ENCODE measurements at regions of chr6 and their contacts with region 1.

Region 1: GRCh38 chr6:110682460-110682853 is 132.8 kb downstream of the CDK19 start:
- DNase-seq: peak; percentile 85
- ATAC-seq: peak; percentile 100
- H3K4me3 ChIP-seq: no peak overlapping the region
- H3K27ac ChIP-seq: no peak overlapping the region; the same call in 1 of the 2 replicates
- H3K4me1 ChIP-seq: 0 out of 2 replicates have a peak, but pooled peaks cover 6% of the 10 kb centered on the region
- H3K27me3 ChIP-seq: no peaks in the 10 kb centered on the region
- CTCF ChIP-seq: peak; percentile 59 to 83 (median 70); a peak in 5 of 6 replicates
- EP300 ChIP-seq: no peak
- POLR2A ChIP-seq: no peak
- RAD21 ChIP-seq: peak; percentile 99

Region 2: DNA sequence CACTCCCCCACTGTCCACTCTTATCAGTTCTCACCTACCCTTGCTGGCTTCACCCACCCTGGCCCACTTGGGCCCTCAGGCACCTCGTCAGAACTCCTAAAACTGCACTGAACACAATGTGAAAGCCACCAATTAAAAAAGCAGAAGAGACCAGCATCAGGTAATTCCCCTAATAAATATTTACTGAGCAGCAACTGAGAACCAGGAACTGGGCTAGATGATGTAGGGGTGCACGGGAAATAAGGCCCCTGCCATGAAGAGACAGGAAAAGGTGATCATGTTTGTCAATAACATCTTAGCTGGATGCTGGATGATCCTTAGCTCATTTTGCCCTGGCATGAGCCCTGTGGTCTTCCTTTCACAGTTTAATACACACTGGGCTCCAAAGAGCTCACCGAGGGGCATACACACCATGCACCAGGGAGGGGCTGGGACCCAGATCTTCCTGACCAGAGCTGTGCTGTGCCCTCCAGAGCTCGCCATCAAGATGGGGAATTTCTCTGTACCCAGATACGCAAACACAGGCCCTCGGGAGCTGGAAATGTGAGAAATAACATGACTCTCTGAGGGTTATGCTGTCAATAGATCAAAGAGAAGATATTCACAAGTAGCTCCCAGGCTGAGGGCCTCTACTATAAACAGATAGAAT is 92.5 kb before region 1 on chr6:
- CTCF ChIA-PET with region 1: interaction called, 3 read pairs
- POLR2A ChIA-PET with region 1: no interaction called
- RAD21 ChIA-PET with region 1: interaction called, 10 read pairs
- SMC1A ChIA-PET with region 1: interaction called, 3 read pairs
- in situ Hi-C with region 1: no loop called
- intact Hi-C with region 1: no loop called
- DNase-seq: peak; percentile 56
- ATAC-seq: peak; percentile 92
- H3K4me3 ChIP-seq: no peak overlapping the region
- H3K27ac ChIP-seq: peak overlapping the region; percentile 29
- H3K4me1 ChIP-seq: peaks cover 20% of the 10 kb centered on the region
- H3K27me3 ChIP-seq: no peaks in the 10 kb centered on the region
- CTCF ChIP-seq: no peak
- EP300 ChIP-seq: no peak; a peak in 2 of 4 replicates
- POLR2A ChIP-seq: no peak
- RAD21 ChIP-seq: no peak

Region 3: DNA sequence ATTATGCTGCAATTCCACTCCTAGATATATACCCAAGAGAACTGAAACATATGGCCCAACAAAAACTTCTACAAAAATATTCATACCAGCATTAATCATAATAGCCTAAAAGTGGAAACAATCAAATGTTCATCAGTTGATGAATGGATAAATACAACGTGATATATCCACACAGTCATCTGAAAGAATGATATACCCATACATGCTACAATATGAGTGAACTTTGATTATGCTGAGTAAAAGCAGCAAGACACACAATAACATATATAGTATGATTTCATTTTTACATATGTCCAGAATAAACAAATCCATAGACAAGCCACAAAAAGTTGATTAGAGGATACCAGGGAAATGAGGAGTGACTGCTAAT is 102.1 kb after region 1 on chr6:
- CTCF ChIA-PET with region 1: interaction called, 3 read pairs
- POLR2A ChIA-PET with region 1: interaction called, 3 read pairs
- RAD21 ChIA-PET with region 1: no interaction called
- SMC1A ChIA-PET with region 1: interaction called, 3 read pairs
- in situ Hi-C with region 1: no loop called
- intact Hi-C with region 1: loop called (anchors 5 kb)
- DNase-seq: no peak
- ATAC-seq: peak; percentile 59
- H3K4me3 ChIP-seq: no peak overlapping the region
- H3K27ac ChIP-seq: no peak overlapping the region
- H3K4me1 ChIP-seq: peaks cover 36% of the 10 kb centered on the region
- H3K27me3 ChIP-seq: no peaks in the 10 kb centered on the region
- CTCF ChIP-seq: no peak
- EP300 ChIP-seq: no peak
- POLR2A ChIP-seq: no peak
- RAD21 ChIP-seq: no peak

Region 4: DNA sequence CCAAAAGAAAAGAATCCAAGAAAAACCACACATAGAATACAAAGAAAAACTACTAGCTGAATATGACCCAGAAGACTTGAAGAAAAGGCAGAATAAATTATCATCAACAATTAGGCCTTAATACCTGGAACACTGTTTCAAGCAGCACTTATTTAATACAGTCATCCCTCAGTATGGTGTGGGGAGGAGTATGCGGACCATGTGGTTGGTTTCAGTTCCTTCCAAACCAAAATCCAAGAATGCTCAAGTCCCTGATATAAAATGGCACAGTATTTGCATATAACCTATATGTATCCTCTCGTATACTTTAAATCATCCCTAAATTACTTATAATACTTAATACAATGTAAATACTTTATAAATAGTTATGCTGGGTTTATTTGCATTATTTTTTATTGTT is 116.7 kb after region 1 on chr6:
- CTCF ChIA-PET with region 1: no interaction called
- POLR2A ChIA-PET with region 1: no interaction called
- RAD21 ChIA-PET with region 1: no interaction called
- SMC1A ChIA-PET with region 1: no interaction called
- in situ Hi-C with region 1: no loop called
- intact Hi-C with region 1: no loop called
- DNase-seq: no peak
- ATAC-seq: peak; percentile 78
- H3K4me3 ChIP-seq: no peak overlapping the region
- H3K27ac ChIP-seq: no peak overlapping the region
- H3K4me1 ChIP-seq: no peaks in the 10 kb centered on the region
- H3K27me3 ChIP-seq: no peaks in the 10 kb centered on the region
- CTCF ChIP-seq: no peak
- EP300 ChIP-seq: no peak
- POLR2A ChIP-seq: no peak
- RAD21 ChIP-seq: no peak

Region 5: DNA sequence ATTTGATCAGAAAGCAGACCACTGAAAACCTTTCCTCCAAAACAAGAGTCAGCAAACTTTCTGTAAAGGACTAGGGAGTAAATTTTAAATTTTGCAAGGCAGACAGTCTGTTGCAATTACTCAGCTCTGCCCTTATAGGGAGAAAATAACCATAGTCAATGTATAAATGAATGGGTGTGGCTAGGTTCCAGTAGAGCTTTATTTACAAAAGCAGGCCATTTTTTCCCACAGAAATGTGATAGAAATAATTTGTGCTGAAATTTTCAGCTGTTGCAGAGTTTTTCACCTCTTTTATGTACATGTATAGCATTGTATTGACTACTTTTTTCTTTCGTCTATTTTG is 199.8 kb after region 1 on chr6:
- CTCF ChIA-PET with region 1: interaction called, 87 read pairs
- POLR2A ChIA-PET with region 1: interaction called, 11 read pairs
- RAD21 ChIA-PET with region 1: interaction called, 98 read pairs
- SMC1A ChIA-PET with region 1: interaction called, 74 read pairs
- in situ Hi-C with region 1: loop called (anchors 5 kb)
- intact Hi-C with region 1: loop called (anchors 1 kb)
- DNase-seq: no peak
- ATAC-seq: no peak
- H3K4me3 ChIP-seq: peak overlapping the region; percentile 40
- H3K27ac ChIP-seq: 0 out of 2 replicates have a peak overlapping the region, but pooled peaks have one; percentile 38
- H3K4me1 ChIP-seq: peaks cover 71% of the 10 kb centered on the region
- H3K27me3 ChIP-seq: no peaks in the 10 kb centered on the region
- CTCF ChIP-seq: no peak
- EP300 ChIP-seq: no peak
- POLR2A ChIP-seq: no peak
- RAD21 ChIP-seq: no peak

Region 6: DNA sequence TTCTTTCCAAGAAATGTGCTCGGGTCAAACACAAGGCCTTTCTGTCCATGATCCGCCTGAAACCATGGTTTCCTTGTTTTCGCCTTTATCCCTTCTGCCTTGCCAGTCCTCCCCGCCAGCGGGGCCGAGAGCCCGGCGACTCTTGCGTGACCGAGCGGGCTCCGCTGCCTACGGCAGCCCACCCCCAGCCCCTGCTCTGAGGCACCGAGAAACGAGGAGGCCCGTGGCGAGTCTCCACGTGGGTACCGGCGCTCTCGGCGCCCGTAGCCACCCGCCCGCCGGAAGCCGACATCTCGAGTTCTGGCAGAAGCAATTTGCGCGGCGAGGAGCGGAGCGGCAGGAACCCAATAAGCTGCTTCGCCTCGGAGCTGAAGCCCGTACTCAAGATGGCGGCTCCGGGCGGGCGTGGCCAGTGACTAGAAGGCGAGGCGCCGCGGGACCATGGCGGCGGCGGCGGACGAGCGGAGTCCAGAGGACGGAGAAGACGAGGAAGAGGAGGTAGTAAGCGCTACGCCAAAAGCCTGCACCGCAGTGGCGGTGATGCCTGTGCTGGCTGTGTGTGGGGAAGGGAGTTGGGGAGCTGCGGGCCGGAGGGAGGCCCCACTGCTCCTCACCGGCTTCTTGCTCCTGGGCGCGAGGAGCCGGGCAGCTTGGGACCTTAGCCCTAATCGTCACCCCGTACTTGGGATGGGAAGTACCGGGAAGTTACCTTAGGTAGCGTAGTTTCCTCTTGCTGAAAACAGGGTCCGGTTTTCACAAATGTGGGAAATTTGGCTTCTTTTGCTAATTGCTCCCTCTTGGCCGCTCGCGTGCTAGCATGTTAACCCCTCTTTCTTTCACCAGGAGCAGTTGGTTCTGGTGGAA is 276.1 kb after region 1 on chr6 and contains the start of gene GTF3C6:
- CTCF ChIA-PET with region 1: interaction called, 16 read pairs
- POLR2A ChIA-PET with region 1: no interaction called
- RAD21 ChIA-PET with region 1: interaction called, 12 read pairs
- SMC1A ChIA-PET with region 1: interaction called, 117 read pairs
- in situ Hi-C with region 1: no loop called
- intact Hi-C with region 1: no loop called
- DNase-seq: peak; percentile 61
- ATAC-seq: peak; percentile 99
- H3K4me3 ChIP-seq: peak within 1 kb of the TSS; percentile 98
- H3K27ac ChIP-seq: peak within 1 kb of the TSS; percentile 96
- H3K4me1 ChIP-seq: peaks cover 7% of the 10 kb centered on the region
- H3K27me3 ChIP-seq: no peaks in the 10 kb centered on the region
- CTCF ChIP-seq: no peak
- EP300 ChIP-seq: no peak
- POLR2A ChIP-seq: peak; percentile 100
- RAD21 ChIP-seq: no peak
- polyA plus RNA-seq, gene GTF3C6: 122 to 154 TPM

Region 7: GRCh38 chr6:110999634-111000270 is 317.3 kb after region 1 on chr6:
- CTCF ChIA-PET with region 1: interaction called, 5 read pairs
- POLR2A ChIA-PET with region 1: no interaction called
- RAD21 ChIA-PET with region 1: interaction called, 7 read pairs
- SMC1A ChIA-PET with region 1: interaction called, 7 read pairs
- in situ Hi-C with region 1: no loop called
- intact Hi-C with region 1: loop called (anchors 5 kb)
- DNase-seq: no peak
- ATAC-seq: peak; percentile 52
- H3K4me3 ChIP-seq: no peak overlapping the region
- H3K27ac ChIP-seq: no peak overlapping the region
- H3K4me1 ChIP-seq: no peaks in the 10 kb centered on the region
- H3K27me3 ChIP-seq: no peaks in the 10 kb centered on the region
- CTCF ChIP-seq: peak in 2 of 3 experiments; percentile 13 to 26; a peak in 2 of 6 replicates
- EP300 ChIP-seq: no peak
- POLR2A ChIP-seq: no peak
- RAD21 ChIP-seq: peak; percentile 55

Measured in GM12878 (cell line).